ENCODE measurements at regions of chr19 and their contacts with region 1.

Region 1: GRCh38 chr19:40139533-40140287 is 49.0 kb upstream of the ZNF780A start:
- DNase-seq: peak in 5 of 14 experiments; percentile 5 to 79 (median 65)
- ATAC-seq: no peak
- H3K4me3 ChIP-seq: no peak overlapping the region
- H3K4me3 Mint-ChIP-seq: no peak overlapping the region
- H3K27ac ChIP-seq: no peak overlapping the region
- H3K27ac Mint-ChIP-seq: no peak overlapping the region
- H3K4me1 ChIP-seq: peaks cover 18% of the 10 kb centered on the region
- H3K4me1 Mint-ChIP-seq: peaks cover 26% of the 10 kb centered on the region
- H3K27me3 ChIP-seq: no peaks in the 10 kb centered on the region
- H3K27me3 Mint-ChIP-seq: peaks cover 15% of the 10 kb centered on the region
- CTCF ChIP-seq: peak; percentile 85

Region 2: DNA sequence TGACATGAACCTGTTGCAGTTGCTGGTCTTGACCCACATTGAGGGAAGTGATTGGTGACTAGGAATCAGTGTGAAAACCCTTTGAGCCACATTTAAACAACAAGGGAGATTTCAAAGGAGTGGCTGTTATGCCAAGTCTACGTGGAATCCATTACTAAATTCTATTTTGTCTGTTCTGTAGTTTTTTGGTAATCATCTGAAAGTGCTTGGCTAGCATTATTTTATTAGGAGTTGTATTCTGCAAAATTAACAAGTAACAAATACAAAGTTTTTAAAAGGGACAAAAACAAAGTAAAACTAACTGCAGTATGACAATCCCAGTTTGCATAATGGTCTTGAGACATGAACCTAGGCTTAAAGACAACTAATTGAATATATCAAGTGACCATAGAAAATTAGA is 35.0 kb before region 1 on chr19:
- CTCF ChIA-PET with region 1: no interaction called
- POLR2A ChIA-PET with region 1: no interaction called
- intact Hi-C with region 1: no loop called
- DNase-seq: no peak
- ATAC-seq: no peak
- H3K4me3 ChIP-seq: no peak overlapping the region
- H3K4me3 Mint-ChIP-seq: no peak overlapping the region
- H3K27ac ChIP-seq: no peak overlapping the region
- H3K27ac Mint-ChIP-seq: no peak overlapping the region
- H3K4me1 ChIP-seq: no peaks in the 10 kb centered on the region
- H3K4me1 Mint-ChIP-seq: no peaks in the 10 kb centered on the region
- H3K27me3 ChIP-seq: no peaks in the 10 kb centered on the region
- H3K27me3 Mint-ChIP-seq: no peaks in the 10 kb centered on the region
- CTCF ChIP-seq: no peak

Region 3: DNA sequence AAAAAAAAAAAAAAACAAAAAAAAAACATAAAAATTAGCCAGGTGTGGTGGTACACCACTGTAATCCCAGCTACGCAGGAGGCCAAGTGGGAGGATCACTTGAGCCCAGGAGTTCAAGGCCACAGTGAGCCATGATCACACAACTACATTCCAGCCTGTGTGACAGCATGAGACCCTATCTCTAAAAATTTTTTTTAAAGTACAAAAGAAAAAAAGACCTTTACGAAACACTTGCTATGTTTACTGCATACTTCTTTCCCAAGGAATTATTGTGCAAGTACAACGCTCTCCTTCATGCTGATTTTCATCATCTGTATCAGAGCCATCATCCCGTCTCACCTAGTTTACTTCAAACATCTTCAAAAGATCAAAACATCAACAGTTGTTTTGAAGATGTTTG is 20.3 kb before region 1 on chr19:
- CTCF ChIA-PET with region 1: no interaction called
- POLR2A ChIA-PET with region 1: no interaction called
- intact Hi-C with region 1: no loop called
- DNase-seq: no peak
- ATAC-seq: no peak
- H3K4me3 ChIP-seq: no peak overlapping the region
- H3K4me3 Mint-ChIP-seq: no peak overlapping the region
- H3K27ac ChIP-seq: no peak overlapping the region
- H3K27ac Mint-ChIP-seq: no peak overlapping the region
- H3K4me1 ChIP-seq: no peaks in the 10 kb centered on the region
- H3K4me1 Mint-ChIP-seq: no peaks in the 10 kb centered on the region
- H3K27me3 ChIP-seq: peaks cover 0 to 5% of the 10 kb centered on the region in 2 experiments
- H3K27me3 Mint-ChIP-seq: peaks cover 57% of the 10 kb centered on the region
- CTCF ChIP-seq: no peak

Region 4: DNA sequence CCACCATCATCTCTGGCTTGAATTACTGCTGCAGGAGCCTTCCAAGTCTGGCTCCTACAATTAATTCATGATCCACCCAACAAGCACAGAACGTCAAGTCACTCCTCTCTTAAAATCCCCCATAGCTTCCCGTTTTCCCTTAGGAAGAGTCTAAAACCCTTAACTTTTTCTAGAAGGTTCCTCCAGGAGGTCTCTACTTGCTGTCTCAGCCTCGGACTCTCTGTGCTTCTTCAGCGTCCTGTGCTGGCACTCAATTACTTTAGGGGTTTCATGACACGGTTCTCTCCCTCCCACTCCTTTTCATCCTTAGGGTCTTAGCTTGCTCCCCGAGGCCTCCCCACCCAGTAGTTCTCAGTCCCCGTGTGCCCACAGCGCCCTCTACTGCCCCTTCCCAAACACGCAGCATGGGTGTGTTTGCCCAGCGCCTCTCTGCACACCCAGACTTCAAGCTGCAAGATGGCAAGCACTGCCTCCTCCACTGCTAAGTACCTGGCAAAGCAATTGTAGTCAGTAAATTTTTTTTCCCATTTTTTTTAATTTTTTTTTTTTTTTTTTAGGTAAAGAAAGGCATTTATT is 25.7 kb after region 1 on chr19:
- CTCF ChIA-PET with region 1: interaction called, 14 read pairs
- POLR2A ChIA-PET with region 1: interaction called, 8 read pairs
- intact Hi-C with region 1: loop called (anchors 1 to 2 kb)
- DNase-seq: peak; percentile 36 to 75 (median 48)
- ATAC-seq: peak; percentile 71
- H3K4me3 ChIP-seq: no peak overlapping the region
- H3K4me3 Mint-ChIP-seq: no peak overlapping the region
- H3K27ac ChIP-seq: no peak overlapping the region
- H3K27ac Mint-ChIP-seq: no peak overlapping the region
- H3K4me1 ChIP-seq: peaks cover 20% of the 10 kb centered on the region
- H3K4me1 Mint-ChIP-seq: peaks cover 18% of the 10 kb centered on the region
- H3K27me3 ChIP-seq: no peaks in the 10 kb centered on the region
- H3K27me3 Mint-ChIP-seq: no peaks in the 10 kb centered on the region
- CTCF ChIP-seq: peak; percentile 53

Region 5: DNA sequence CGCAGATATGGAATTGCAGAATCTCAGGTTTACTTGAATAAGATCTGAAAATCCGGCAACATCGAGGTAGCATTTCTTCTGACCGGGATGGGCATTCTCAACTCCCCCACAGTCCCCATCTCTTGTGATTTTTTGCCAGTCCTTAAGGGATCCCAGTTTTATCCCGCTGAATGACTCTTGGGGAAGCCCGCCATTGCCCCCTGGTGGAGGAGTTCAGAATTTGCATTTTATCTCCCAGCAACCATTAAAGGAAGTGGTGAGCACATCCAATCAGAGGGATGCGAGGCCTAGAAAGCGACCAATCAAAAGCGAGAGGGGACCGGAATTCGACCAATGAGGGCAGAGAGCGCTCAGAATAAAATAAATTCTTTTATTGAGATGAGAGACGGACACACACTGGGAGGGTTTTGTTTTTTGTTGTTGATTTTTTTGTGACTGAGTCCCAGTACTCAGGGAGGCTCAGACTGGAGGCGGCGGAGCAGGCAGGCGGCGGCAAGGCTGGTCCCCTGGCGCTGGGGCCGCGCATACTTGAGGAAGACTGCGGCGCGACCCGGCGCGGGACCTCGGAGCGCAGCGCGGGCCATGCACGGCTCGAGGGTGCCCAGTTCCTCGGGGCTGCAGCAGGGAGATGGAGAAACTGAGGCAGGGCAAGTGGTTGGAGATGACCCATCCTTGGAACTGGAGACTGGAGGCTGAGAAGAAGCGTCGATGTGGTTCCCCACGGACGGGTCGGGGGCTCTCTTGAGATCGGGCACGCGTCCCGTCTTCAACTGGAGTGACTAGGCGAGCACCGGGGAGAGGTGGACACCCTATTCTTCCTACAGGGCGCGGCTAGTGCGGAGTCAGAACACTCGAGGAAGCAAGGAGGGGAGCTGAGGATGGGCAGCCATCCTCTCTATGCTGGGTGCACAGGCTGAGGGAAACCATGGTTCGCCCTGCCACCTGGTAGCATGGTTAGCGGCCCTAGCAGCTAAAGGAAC is 82.4 kb after region 1 on chr19:
- CTCF ChIA-PET with region 1: interaction called, 6 read pairs
- POLR2A ChIA-PET with region 1: interaction called, 5 read pairs
- intact Hi-C with region 1: loop called (anchors 1 kb)
- DNase-seq: peak; percentile 54 to 91 (median 66)
- ATAC-seq: peak; percentile 89
- H3K4me3 ChIP-seq: no peak overlapping the region
- H3K4me3 Mint-ChIP-seq: peak overlapping the region; percentile 26
- H3K27ac ChIP-seq: no peak overlapping the region
- H3K27ac Mint-ChIP-seq: peak overlapping the region; percentile 2
- H3K4me1 ChIP-seq: peaks cover 44% of the 10 kb centered on the region
- H3K4me1 Mint-ChIP-seq: peaks cover 16% of the 10 kb centered on the region
- H3K27me3 ChIP-seq: peaks cover 56 to 58% of the 10 kb centered on the region in 2 experiments
- H3K27me3 Mint-ChIP-seq: peaks cover 68% of the 10 kb centered on the region
- CTCF ChIP-seq: peak; percentile 86

Region 6: DNA sequence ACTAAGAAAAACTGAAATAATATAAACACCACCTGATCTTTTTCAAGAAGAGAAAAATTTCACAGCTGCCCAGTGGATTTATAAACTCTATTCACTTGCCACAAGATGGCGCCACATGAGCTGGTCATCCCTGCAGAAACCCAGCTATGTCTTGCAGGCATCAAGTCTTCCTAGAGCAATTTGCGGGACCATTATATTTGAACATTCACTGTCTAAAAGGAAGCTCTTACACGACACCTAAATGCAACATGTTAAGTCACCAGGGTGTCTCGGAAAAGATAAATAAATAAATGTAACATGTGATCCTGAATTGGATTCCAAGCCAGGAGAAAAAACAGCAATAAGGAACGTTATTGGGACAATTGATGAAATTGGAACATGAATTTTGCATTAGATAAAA is 165.7 kb after region 1 on chr19:
- CTCF ChIA-PET with region 1: no interaction called
- POLR2A ChIA-PET with region 1: no interaction called
- intact Hi-C with region 1: loop called in 1 of 2 experiments (anchors 2 kb)
- DNase-seq: peak; percentile 49 to 86 (median 69)
- ATAC-seq: no peak
- H3K4me3 ChIP-seq: no peak overlapping the region
- H3K4me3 Mint-ChIP-seq: no peak overlapping the region
- H3K27ac ChIP-seq: no peak overlapping the region
- H3K27ac Mint-ChIP-seq: no peak overlapping the region
- H3K4me1 ChIP-seq: no peaks in the 10 kb centered on the region
- H3K4me1 Mint-ChIP-seq: no peaks in the 10 kb centered on the region
- H3K27me3 ChIP-seq: no peaks in the 10 kb centered on the region
- H3K27me3 Mint-ChIP-seq: no peaks in the 10 kb centered on the region
- CTCF ChIP-seq: peak; percentile 78

Region 7: DNA sequence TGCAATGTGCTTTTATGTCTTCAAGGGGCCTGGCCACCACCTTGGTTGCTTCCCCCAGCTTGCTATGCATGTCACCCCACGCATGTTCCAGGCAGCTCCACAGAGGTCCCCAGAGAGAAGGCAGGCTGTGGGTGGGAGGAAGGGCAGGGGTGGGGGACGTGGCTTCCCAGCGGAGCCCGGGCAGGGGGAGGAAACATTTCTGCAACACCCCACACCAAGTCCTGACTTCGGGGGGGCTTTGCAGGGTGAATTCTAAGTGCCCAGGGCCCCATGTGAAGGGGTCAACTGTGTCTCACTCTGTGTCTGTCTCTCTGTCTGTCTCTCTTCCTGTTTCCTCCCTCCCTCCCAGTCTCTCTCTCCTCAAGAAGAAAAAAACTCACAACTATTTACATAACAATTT is 501.0 kb after region 1 on chr19:
- CTCF ChIA-PET with region 1: no interaction called
- POLR2A ChIA-PET with region 1: no interaction called
- intact Hi-C with region 1: loop called (anchors 2 to 10 kb)
- DNase-seq: peak in 2 of 14 experiments; percentile 37 to 40
- ATAC-seq: peak; percentile 37
- H3K4me3 ChIP-seq: no peak overlapping the region
- H3K4me3 Mint-ChIP-seq: no peak overlapping the region
- H3K27ac ChIP-seq: no peak overlapping the region
- H3K27ac Mint-ChIP-seq: no peak overlapping the region
- H3K4me1 ChIP-seq: peaks cover 11% of the 10 kb centered on the region
- H3K4me1 Mint-ChIP-seq: peaks cover 7% of the 10 kb centered on the region
- H3K27me3 ChIP-seq: peaks cover 0 to under 1% of the 10 kb centered on the region in 2 experiments
- H3K27me3 Mint-ChIP-seq: no peaks in the 10 kb centered on the region
- CTCF ChIP-seq: no peak

Measured in CD4-positive, alpha-beta T cell (primary cell).